ENCODE measurements at regions of chr4 and their contacts with region 1.

Region 1: GRCh38 chr4:53702334-53703266 is 111.3 kb upstream of the LNX1 start:
- DNase-seq: peak; percentile 88 to 90
- ATAC-seq: peak; percentile 92
- H3K4me3 ChIP-seq: no peak overlapping the region
- H3K27ac ChIP-seq: peak overlapping the region in 1 of 2 donors; percentile 22
- H3K4me1 ChIP-seq: no peaks in the 10 kb centered on the region
- H3K27me3 ChIP-seq: no peaks in the 10 kb centered on the region

Region 2: GRCh38 chr4:53522336-53522735 is 180.3 kb before region 1 on chr4:
- intact Hi-C with region 1: no loop called
- DNase-seq: no peak
- ATAC-seq: no peak
- H3K4me3 ChIP-seq: no peak overlapping the region
- H3K27ac ChIP-seq: no peak overlapping the region
- H3K4me1 ChIP-seq: no peaks in the 10 kb centered on the region
- H3K27me3 ChIP-seq: no peaks in the 10 kb centered on the region

Region 3: GRCh38 chr4:53767482-53767881 is 64.9 kb after region 1 on chr4:
- intact Hi-C with region 1: no loop called
- DNase-seq: no peak
- ATAC-seq: no peak
- H3K4me3 ChIP-seq: no peak overlapping the region
- H3K27ac ChIP-seq: no peak overlapping the region
- H3K4me1 ChIP-seq: no peaks in the 10 kb centered on the region
- H3K27me3 ChIP-seq: no peaks in the 10 kb centered on the region

Region 4: GRCh38 chr4:53899586-53900270 is 197.1 kb after region 1 on chr4:
- intact Hi-C with region 1: loop called in 1 of 2 experiments (anchors 5 kb)
- DNase-seq: peak in 1 of 2 donors; percentile 45
- ATAC-seq: peak; percentile 71
- H3K4me3 ChIP-seq: no peak overlapping the region
- H3K27ac ChIP-seq: peak overlapping the region; percentile 36 to 77
- H3K4me1 ChIP-seq: peaks cover 0 to 3% of the 10 kb centered on the region in 2 donors
- H3K27me3 ChIP-seq: no peaks in the 10 kb centered on the region

Region 5: GRCh38 chr4:54217642-54218495 is 515.3 kb after region 1 on chr4:
- intact Hi-C with region 1: loop called (anchors 5 kb)
- DNase-seq: peak; percentile 73 to 82
- ATAC-seq: peak; percentile 93
- H3K4me3 ChIP-seq: peak overlapping the region; percentile 9 to 36
- H3K27ac ChIP-seq: peak overlapping the region in 1 of 2 donors; percentile 20
- H3K4me1 ChIP-seq: no peaks in the 10 kb centered on the region
- H3K27me3 ChIP-seq: no peaks in the 10 kb centered on the region